CD8-positive, alpha-beta T cell (primary cell): ENCODE measurements at regions of chr2 and their contacts with region 1.

Region 1: DNA sequence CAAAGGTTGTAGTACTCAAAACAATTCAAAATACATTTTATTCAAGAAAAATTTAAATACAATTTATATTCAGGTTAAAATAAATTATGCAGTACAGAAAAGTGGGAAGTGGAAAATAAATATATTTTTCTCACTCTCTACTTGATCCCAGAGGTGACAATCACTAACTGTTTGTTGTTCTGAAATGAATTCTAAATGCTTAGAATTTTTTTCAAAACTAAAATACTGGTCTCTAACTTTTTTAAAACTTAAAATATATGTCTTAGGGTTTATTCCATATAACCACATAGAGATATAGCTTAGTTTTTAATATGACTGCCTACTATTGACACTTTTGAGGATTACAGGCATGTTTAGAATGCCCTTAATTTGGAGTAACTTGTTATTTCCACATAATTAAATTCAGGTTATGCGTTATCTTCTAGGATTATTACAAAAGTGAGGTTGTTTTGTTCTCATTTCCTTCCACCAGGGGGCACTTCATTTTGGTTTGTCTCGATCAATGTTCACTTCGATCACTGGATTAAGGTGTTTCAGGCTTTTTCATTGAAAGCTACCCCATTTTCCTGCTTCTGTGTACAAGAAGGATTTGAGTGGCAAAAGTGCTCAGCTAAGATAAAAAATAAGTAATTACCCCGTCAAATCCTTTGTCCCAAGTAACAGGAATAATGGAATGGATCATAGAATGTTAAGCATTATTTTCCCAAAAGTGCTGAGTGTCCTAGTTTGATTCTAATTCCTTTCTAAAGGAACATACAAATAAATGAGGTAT is 27.1 kb upstream of the TFPI start:
- DNase-seq: peak in 3 of 9 experiments; percentile 6 to 34 (median 10)
- ATAC-seq: no peak
- H3K4me3 ChIP-seq: no peak overlapping the region
- H3K4me3 Mint-ChIP-seq: no peak overlapping the region
- H3K27ac ChIP-seq: no peak overlapping the region
- H3K27ac Mint-ChIP-seq: no peak overlapping the region
- H3K4me1 ChIP-seq: no peaks in the 10 kb centered on the region
- H3K4me1 Mint-ChIP-seq: peaks cover 5% of the 10 kb centered on the region
- H3K27me3 ChIP-seq: no peaks in the 10 kb centered on the region
- H3K27me3 Mint-ChIP-seq: no peaks in the 10 kb centered on the region
- CTCF ChIP-seq: peak; percentile 26

Region 2: DNA sequence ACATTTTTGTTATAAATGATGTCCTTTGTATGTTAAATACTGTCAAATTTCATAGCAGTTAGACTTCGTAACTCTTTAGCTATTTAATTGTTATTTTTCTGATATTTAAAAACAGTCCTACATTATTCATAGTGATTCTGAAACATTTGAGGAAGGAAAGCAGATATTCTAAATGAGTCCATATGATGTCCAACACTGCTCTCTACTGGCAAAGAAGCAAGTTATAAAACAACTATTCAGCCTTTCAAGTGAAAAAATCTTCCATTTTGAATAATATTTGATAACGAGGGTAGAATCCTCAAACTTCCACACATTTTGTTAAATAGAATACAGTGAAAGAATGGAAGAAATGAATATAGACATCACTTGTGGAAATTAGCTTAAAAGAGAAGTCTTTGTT is 931.1 kb after region 1 on chr2:
- CTCF ChIA-PET with region 1: no interaction called
- POLR2A ChIA-PET with region 1: no interaction called
- intact Hi-C with region 1: loop called in 1 of 2 experiments (anchors 5 kb)
- DNase-seq: peak in 1 of 9 experiments; percentile 18
- ATAC-seq: no peak
- H3K4me3 ChIP-seq: no peak overlapping the region
- H3K4me3 Mint-ChIP-seq: no peak overlapping the region
- H3K27ac ChIP-seq: no peak overlapping the region
- H3K27ac Mint-ChIP-seq: no peak overlapping the region
- H3K4me1 ChIP-seq: no peaks in the 10 kb centered on the region
- H3K4me1 Mint-ChIP-seq: no peaks in the 10 kb centered on the region
- H3K27me3 ChIP-seq: no peaks in the 10 kb centered on the region
- H3K27me3 Mint-ChIP-seq: no peaks in the 10 kb centered on the region
- CTCF ChIP-seq: no peak